Activated naive CD4-positive, alpha-beta T cell treated with anti-CD3 and anti-CD28 coated beads for 36 hours (primary cell): ENCODE measurements at regions of chr21 and their contacts with region 1.

Region 1: DNA sequence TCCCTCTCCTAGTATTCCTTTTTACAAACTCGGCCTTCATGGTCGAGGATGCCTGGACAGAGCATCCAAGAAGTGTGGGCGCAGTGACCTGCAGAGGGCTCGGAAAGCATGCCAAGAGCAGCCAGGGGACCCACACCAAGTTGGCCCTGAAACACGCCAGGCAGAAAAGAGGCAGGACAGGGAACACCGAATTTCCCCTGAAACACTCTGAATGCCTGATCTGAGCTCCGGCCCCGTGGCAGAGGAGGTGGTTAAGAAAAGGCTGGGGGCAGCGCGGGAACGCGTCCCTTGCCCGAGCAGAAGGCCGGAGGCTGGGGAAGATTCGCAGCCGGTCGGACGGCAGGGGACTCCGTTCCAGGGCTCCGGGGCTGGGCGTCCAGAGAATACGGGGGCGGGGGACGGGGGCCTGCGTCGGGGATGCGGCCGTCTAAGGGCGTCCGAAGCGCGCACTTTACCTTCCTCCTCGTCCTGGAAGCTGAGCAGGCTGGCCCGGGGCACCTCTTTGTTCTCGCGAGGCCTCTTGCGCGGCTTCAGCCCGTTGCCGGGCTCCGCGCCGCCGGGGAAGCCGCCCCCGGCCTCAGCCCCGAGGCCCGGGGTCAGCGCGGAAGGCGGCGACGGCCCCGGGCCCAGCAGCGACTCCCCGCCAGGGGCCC is 558 bp downstream of the PAXBP1 start:
- DNase-seq: peak; percentile 67
- H3K4me3 Mint-ChIP-seq: peak overlapping the region; percentile 92
- H3K27ac Mint-ChIP-seq: peak overlapping the region; percentile 89
- H3K4me1 Mint-ChIP-seq: peaks cover 54% of the 10 kb centered on the region
- H3K27me3 Mint-ChIP-seq: no peaks in the 10 kb centered on the region

Region 2: DNA sequence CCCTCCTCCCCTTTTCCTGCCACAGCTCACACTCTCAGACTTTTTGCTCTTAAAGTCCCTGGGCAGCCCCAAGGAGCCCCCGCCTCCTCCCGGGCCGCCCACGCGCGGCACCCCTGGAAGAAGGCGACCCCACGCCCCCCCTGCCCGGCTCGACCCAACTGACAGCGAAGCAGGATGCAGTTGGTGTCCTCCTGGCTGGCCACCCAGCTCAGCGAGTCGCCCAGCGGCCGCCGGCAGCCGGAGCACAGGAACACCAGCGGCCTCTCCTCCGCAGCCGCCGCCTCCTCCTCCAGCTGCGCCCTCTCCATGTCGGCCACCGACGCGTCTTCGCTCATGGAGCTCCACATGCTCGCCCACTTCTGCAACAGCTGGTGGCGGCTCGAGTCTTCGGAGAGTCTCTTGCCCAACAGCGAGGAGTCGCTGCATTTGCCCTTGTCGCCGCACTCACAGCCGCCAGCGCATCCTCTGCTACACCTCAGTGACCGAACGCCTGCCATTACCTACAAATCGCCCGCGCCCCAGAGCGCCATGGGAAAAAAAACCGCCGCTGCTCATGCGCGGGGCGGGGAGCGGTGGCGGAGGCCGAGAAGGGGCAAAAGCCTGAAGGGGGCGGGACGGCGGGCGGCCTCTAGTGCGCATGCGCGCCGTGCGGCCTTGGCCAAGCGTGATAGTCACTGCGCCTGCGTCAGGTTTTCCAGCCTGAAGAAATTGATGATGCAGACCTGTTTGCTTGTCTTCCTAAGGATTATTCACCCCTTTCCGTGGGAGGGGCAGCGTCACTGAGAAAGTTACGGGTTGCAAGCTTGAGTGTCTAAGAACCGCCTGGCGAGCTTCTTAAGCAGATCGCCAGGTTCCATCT is 492.2 kb before region 1 on chr21 and contains the start of gene MIS18A:
- CTCF ChIA-PET with region 1: no interaction called
- intact Hi-C with region 1: loop called (anchors 1 kb)
- DNase-seq: peak; percentile 98
- H3K4me3 Mint-ChIP-seq: peak within 1 kb of the TSS; percentile 100
- H3K27ac Mint-ChIP-seq: peak within 1 kb of the TSS; percentile 90
- H3K4me1 Mint-ChIP-seq: peaks cover 17% of the 10 kb centered on the region
- H3K27me3 Mint-ChIP-seq: no peaks in the 10 kb centered on the region
- total RNA-seq, gene MIS18A: 37.4 to 37.8 TPM

Region 3: GRCh38 chr21:32612075-32612998 is 158.7 kb before region 1 on chr21 and contains the start of gene CFAP298:
- CTCF ChIA-PET with region 1: no interaction called
- intact Hi-C with region 1: loop called (anchors 1 kb)
- DNase-seq: peak; percentile 88
- H3K4me3 Mint-ChIP-seq: peak within 1 kb of the TSS; percentile 98
- H3K27ac Mint-ChIP-seq: peak within 1 kb of the TSS; percentile 83
- H3K4me1 Mint-ChIP-seq: peaks cover 13% of the 10 kb centered on the region
- H3K27me3 Mint-ChIP-seq: no peaks in the 10 kb centered on the region
- total RNA-seq, gene CFAP298: 33.3 to 35.6 TPM

Region 4: GRCh38 chr21:32806810-32807386 is 35.9 kb after region 1 on chr21:
- CTCF ChIA-PET with region 1: interaction called, 4 read pairs
- intact Hi-C with region 1: loop called (anchors 1 kb)
- DNase-seq: peak; percentile 71
- H3K4me3 Mint-ChIP-seq: no peak overlapping the region
- H3K27ac Mint-ChIP-seq: peak overlapping the region; percentile 63
- H3K4me1 Mint-ChIP-seq: peaks cover 32% of the 10 kb centered on the region
- H3K27me3 Mint-ChIP-seq: no peaks in the 10 kb centered on the region

Region 5: DNA sequence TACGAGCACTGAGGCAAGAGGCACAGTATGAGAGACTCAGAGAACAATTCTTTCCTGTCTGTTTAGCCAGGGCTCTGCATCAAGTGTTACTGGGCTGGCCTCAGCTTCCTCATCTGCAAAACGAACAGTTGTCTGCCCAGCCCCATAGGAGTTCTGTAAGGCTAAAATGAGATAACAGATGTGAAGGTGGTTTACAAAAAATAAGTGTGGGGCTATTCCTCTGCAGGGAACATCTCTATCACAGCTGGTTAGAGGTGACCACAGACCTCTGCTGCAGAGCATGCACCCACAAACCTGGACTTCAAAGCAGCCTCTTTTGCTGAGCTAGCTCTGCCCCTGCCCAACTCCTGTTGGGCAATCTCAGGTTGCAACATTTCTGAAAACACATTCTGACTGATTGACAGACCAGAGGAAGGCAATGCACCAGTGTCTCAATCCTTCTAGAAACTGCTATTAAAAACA is 288.4 kb after region 1 on chr21:
- CTCF ChIA-PET with region 1: no interaction called
- intact Hi-C with region 1: no loop called
- DNase-seq: no peak
- H3K4me3 Mint-ChIP-seq: no peak overlapping the region
- H3K27ac Mint-ChIP-seq: no peak overlapping the region
- H3K4me1 Mint-ChIP-seq: no peaks in the 10 kb centered on the region
- H3K27me3 Mint-ChIP-seq: peaks cover 5% of the 10 kb centered on the region

Region 6: GRCh38 chr21:33324291-33325221 is 553.6 kb after region 1 on chr21 and contains the start of gene IFNAR1:
- CTCF ChIA-PET with region 1: no interaction called
- intact Hi-C with region 1: loop called (anchors 1 kb)
- DNase-seq: peak; percentile 99
- H3K4me3 Mint-ChIP-seq: no peak within 1 kb of the TSS
- H3K27ac Mint-ChIP-seq: no peak within 1 kb of the TSS
- H3K4me1 Mint-ChIP-seq: peaks cover 28% of the 10 kb centered on the region
- H3K27me3 Mint-ChIP-seq: no peaks in the 10 kb centered on the region
- total RNA-seq, gene IFNAR1: 20.6 to 24.3 TPM

Region 7: GRCh38 chr21:33542640-33543504 is 771.9 kb after region 1 on chr21 and contains the start of gene SON:
- CTCF ChIA-PET with region 1: no interaction called
- intact Hi-C with region 1: loop called (anchors 1 kb)
- DNase-seq: peak; percentile 99
- H3K4me3 Mint-ChIP-seq: peak within 1 kb of the TSS; percentile 90
- H3K27ac Mint-ChIP-seq: peak within 1 kb of the TSS; percentile 99
- H3K4me1 Mint-ChIP-seq: peaks cover 34% of the 10 kb centered on the region
- H3K27me3 Mint-ChIP-seq: no peaks in the 10 kb centered on the region
- total RNA-seq, gene SON: 269 to 273 TPM